ENCODE measurements at regions of chr5 and their contacts with region 1.

Region 1: DNA sequence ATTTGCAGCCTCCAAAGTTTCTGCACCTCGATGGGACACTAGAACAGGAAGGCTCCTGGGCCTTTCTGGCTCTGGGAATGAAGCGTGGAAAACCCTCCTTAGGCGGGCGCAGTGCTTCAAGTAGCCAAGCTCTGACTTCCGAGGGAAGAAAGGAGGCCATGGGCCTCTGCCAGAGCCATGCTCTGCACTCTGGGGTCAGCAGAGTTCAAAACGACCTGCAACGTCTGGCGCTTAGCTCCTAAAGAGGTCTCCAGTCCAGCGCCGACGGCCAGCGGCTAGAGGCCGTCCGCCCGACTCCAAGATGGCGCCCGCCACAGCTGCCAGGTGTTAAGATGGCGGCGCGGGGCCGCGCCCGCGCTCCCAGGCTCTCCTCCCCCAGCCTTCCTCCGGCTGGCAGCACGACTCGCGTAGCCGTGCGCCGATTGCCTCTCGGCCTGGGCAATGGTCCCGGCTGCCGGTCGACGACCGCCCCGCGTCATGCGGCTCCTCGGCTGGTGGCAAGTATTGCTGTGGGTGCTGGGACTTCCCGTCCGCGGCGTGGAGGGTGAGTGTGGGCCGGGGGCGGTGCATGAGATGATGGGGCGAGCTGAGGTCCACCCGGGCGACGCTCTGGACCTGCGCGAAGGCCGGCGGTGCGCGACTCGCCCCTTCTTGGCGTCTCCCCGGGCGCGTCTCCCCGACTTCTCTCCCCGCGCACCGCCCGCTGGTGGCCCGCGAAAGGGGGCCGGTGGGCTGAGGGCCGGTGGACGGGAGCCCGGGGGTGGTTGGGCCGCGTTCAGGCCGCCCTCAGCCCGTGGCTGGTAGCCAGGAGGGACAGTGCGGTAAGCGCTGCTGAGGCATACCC is at the start of gene TXNDC15:
- DNase-seq: peak; percentile 87

Region 2: GRCh38 chr5:134825212-134825611 is 49.0 kb before region 1 on chr5:
- CTCF ChIA-PET with region 1: no interaction called
- POLR2A ChIA-PET with region 1: no interaction called
- DNase-seq: no peak

Region 3: GRCh38 chr5:134845852-134846640 is 28.2 kb before region 1 on chr5 and contains the start of gene C5orf24:
- CTCF ChIA-PET with region 1: no interaction called
- POLR2A ChIA-PET with region 1: interaction called, 23 read pairs
- DNase-seq: peak; percentile 91

Measured in HEK293T (cell line).